ENCODE measurements at regions of chr11 and their contacts with region 1.

Region 1: DNA sequence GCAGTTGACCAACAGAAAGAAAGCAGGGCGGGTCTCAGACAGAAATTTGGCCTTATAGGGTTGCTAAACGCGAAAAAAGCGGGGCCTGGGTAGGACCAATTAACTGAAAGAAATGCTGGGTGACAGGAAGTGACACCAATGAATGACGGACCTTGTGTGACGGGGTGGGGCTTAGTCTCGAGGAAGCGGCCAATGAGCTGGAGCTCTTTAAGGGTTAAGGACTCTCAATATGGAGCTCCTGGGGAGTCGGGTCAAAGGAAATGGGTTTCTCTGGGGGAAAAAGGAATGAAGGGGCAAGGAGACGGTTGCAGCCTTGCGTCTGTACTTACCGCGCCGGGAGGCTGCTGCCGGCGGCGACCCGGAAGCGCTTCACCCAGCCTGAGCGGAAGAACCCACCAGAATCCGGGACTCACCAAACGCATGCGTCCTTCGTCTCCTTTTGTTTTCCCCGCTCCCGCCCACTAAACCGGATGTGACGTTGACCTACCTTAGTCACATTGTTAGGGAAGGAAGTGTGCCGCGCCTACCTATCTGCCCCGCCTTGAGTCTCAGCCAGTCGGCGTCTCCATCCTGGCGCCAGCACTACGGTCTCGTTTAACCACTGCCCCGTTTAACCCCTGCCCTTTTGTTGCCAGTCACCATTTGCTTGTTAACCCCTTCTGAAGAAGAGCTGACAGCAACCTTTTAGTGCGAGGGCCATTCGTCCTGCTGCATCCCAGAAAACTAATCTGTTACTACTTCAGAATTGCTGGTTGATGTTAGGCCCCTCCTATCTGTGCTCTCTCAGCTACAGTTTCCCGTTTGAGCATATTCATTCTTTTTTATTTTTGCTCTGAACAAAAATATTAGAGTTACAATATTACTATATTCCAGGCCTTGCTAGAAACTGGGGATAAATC is at the start of gene ANAPC15:
- DNase-seq: peak; percentile 94 to 96
- H3K4me3 ChIP-seq: peak within 1 kb of the TSS; percentile 78 to 94 (median 87)
- H3K27ac ChIP-seq: peak within 1 kb of the TSS; percentile 99
- H3K4me1 ChIP-seq: peaks cover 0 to 4% (median 0%) of the 10 kb centered on the region in 4 experiments; a peak in 4 of 7 replicates
- H3K27me3 ChIP-seq: peaks cover 0 to 9% (median 0%) of the 10 kb centered on the region in 4 experiments; a peak in 6 of 7 replicates
- CTCF ChIP-seq: no peak
- EP300 ChIP-seq: no peak
- POLR2A ChIP-seq: peak; percentile 97 to 100
- RAD21 ChIP-seq: peak in 1 of 2 experiments; percentile 15; a peak in 1 of 4 replicates
- total RNA-seq, gene ANAPC15: 70.0 and 74.9 TPM in 2 replicates

Region 2: DNA sequence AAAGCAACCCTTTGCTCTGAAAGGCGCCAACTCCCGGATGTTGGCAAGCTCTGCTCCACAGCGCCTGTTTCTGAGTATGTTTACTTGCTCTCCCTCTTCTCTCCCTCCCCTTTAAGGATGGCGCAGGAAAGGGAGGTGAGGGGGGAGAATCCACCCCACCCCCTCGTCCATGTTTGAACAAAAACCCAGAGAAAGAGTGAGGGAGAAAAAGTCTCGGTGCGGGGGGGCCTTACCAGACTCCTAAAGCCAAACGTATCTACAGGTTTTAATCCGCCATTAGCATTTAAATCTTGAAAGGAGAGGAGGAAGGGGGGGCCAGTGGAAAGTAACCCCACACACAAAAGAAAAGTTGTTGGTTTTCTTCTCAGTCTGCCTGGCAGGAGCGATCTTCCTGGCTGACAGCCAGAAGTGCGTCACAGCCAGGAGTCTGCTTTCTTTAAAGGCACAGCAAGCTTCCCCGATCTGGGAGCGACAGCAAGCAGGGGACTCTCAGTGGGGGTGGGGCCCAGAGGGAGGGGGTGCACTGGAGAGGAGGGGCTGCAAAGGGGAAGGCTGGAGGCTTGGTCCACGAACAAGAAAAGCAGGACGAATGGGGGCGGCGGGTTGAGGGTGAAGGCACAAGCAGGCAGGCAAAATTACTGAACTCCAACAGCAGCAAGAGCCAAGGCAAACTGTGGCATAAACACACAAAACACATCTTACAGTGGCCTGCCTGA is 71.7 kb before region 1 on chr11:
- CTCF ChIA-PET with region 1: no interaction called
- POLR2A ChIA-PET with region 1: interaction called, 10 read pairs
- DNase-seq: peak; percentile 50 to 73
- H3K4me3 ChIP-seq: peak overlapping the region; percentile 34 to 55 (median 42); a peak in 7 of 8 replicates
- H3K27ac ChIP-seq: peak overlapping the region; percentile 92
- H3K4me1 ChIP-seq: peaks cover 29 to 36% (median 33%) of the 10 kb centered on the region in 4 experiments
- H3K27me3 ChIP-seq: no peaks in the 10 kb centered on the region
- CTCF ChIP-seq: no peak
- EP300 ChIP-seq: peak in 1 of 2 experiments; percentile 31; a peak in 1 of 3 replicates
- POLR2A ChIP-seq: peak in 1 of 2 experiments; percentile 21; a peak in 2 of 3 replicates
- RAD21 ChIP-seq: no peak

Measured in H1 (cell line).